ENCODE measurements at regions of chr5 and their contacts with region 1.

Region 1: DNA sequence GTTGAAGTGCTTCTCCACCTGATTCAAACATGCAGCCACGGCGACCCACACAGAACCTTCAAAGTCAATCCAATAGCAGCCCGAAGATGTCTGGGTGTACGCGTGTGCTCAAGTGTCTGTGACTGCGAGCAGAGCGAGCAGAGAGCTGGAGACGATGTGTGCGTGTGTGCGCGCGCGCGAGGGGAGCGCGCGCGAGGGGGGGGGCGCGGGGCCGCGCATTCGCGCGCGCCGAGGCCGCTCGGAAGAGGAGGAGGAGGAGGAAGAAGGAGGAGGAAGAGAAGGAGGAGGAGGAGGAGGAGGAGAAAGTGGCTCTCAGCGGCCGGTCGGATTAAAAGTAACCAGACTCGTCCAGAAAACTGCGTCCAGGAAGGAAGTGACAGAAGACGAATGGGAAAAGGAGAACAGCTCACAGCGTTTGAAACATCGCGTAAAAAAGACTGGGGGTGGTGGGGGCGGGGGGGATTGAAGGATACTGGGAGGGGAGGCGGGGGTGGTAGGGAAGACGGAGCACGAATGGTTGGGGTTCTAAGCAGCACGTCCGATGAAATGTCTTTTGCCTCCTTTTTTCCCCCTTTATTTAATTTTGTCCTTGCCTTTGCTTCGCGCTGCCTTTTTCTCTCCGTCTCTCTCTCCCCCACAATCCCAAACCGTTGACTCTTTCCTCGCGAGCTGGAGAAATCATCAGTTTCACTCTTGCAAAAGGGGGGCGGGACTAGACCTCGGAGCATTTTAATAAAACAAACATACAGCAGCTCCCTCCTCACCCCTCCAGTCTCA is at the start of gene MEF2C:
- DNase-seq: peak; percentile 78 to 87 (median 84)
- H3K4me3 ChIP-seq: peak within 1 kb of the TSS; percentile 19 to 96 (median 67)
- H3K27ac ChIP-seq: peak within 1 kb of the TSS; percentile 81 to 98 (median 90)
- H3K4me1 ChIP-seq: peaks cover 21 to 51% of the 10 kb centered on the region in 2 donors
- H3K27me3 ChIP-seq: no peaks in the 10 kb centered on the region
- CTCF ChIP-seq: no peak
- POLR2A ChIP-seq: peak; percentile 87 to 94
- total RNA-seq, gene MEF2C: 43.6 to 172 (median 85.1) TPM

Region 2: DNA sequence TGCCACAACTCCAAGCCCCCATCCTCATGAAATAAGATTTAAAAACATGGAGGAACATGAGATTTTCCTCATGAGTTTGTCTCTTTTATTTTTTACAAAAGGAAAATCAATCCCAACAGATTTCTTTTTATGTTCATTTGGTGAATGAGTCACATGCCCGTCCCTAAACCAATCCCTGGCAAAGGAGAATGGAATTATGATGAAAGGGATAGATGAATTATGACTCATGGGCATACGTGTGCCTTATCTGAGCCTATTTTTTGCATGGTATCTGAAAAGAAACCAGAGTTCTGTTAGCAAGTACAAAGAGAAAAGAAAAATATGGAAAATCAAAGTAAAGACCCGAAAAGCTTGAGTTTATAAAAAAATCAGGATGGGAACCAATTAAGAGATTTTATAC is 347.1 kb before region 1 on chr5:
- intact Hi-C with region 1: no loop called
- DNase-seq: no peak
- H3K4me3 ChIP-seq: no peak overlapping the region
- H3K27ac ChIP-seq: no peak overlapping the region
- H3K4me1 ChIP-seq: no peaks in the 10 kb centered on the region
- H3K27me3 ChIP-seq: no peaks in the 10 kb centered on the region
- CTCF ChIP-seq: no peak
- POLR2A ChIP-seq: no peak

Region 3: GRCh38 chr5:88555674-88556073 is 327.6 kb before region 1 on chr5:
- intact Hi-C with region 1: no loop called
- DNase-seq: no peak
- H3K4me3 ChIP-seq: no peak overlapping the region
- H3K27ac ChIP-seq: no peak overlapping the region
- H3K4me1 ChIP-seq: no peaks in the 10 kb centered on the region
- H3K27me3 ChIP-seq: no peaks in the 10 kb centered on the region
- CTCF ChIP-seq: no peak
- POLR2A ChIP-seq: no peak

Region 4: DNA sequence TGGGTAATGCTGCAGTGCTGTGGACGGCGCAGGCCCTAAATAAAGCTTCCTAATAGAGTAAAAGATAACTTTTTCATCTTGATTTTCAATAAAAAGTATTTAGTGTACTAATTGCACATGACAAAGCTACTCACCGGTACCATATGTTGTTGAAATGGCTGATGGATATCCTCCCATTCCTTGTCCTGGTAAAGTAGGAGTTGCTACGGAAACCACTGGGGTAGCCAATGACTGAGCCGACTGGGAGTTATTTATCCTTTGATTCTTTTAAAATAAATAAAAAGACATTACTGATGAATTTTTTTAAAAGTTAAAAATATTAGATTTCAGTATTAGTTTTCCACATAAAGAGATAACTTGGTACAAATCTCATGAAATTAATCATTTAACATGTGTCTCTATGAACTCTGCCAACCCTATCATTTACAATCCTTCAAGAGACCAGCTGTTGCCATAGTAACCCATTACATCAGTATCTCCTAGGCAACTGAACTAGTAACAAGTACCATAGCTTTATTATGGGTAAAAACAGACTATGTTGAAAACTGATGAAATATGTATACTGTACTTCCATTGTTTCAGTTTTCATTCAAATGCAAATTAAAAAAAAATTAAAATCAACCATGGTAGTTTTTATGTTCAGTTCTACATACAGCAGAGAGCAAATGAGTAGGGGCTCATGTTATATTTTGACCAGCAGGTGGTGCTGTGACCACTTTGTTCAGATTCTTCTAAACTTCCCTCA is 154.0 kb before region 1 on chr5:
- intact Hi-C with region 1: loop called (anchors 5 to 10 kb)
- DNase-seq: peak; percentile 62 to 92 (median 78)
- H3K4me3 ChIP-seq: no peak overlapping the region
- H3K27ac ChIP-seq: no peak overlapping the region
- H3K4me1 ChIP-seq: peaks cover 26 to 44% of the 10 kb centered on the region in 2 donors
- H3K27me3 ChIP-seq: no peaks in the 10 kb centered on the region
- CTCF ChIP-seq: peak; percentile 77 to 87 (median 80)
- POLR2A ChIP-seq: no peak

Region 5: DNA sequence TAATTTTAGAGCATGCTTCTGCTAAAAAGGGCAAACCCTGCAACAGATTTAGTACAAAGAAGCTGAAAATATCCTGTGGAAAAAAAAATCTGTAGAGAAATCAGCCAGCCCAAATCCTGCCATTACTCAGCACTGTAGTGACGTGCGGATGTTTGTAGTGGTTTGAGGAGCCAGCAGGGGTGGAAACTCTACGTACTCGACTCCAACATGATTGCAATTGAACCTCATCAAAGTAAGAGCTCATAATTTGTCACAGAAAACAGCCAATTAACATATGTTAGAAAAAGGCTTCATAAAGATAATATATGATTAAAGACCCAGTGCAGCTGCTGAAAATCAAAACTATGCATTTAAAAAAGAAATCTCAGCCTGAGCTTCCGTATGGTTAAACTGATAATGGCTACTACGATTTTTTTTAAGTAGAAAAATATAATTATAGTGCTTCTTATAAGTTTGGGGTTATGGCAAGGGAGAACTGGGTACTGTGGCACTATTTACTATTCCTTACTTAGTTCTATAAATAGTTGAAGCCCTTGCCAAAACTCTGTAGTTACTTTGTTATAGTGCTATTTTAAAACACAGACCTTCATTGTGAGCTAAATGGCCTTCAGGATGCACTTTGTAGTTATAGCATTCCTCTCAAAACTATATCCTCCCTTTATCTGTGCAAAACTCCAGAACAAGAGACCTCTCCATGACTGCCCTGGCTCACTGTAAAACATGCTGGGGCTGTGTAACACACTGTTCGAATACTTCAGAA is 49.7 kb before region 1 on chr5:
- intact Hi-C with region 1: loop called (anchors 5 to 10 kb)
- DNase-seq: peak; percentile 65 to 84 (median 77)
- H3K4me3 ChIP-seq: peak overlapping the region in 1 of 4 donors; percentile 34
- H3K27ac ChIP-seq: peak overlapping the region in 4 of 5 donors; percentile 53 to 84 (median 76)
- H3K4me1 ChIP-seq: peaks cover 37 to 89% of the 10 kb centered on the region in 2 donors
- H3K27me3 ChIP-seq: no peaks in the 10 kb centered on the region
- CTCF ChIP-seq: peak in 1 of 6 experiments; percentile 20
- POLR2A ChIP-seq: peak in 1 of 2 donors; percentile 49

Region 6: GRCh38 chr5:89071101-89071940 is 188.1 kb after region 1 on chr5:
- intact Hi-C with region 1: no loop called
- DNase-seq: no peak
- H3K4me3 ChIP-seq: no peak overlapping the region
- H3K27ac ChIP-seq: no peak overlapping the region
- H3K4me1 ChIP-seq: no peaks in the 10 kb centered on the region
- H3K27me3 ChIP-seq: no peaks in the 10 kb centered on the region
- CTCF ChIP-seq: no peak
- POLR2A ChIP-seq: no peak